HEK293 (cell line): ENCODE measurements at regions of chr12 and their contacts with region 1.

Region 1: DNA sequence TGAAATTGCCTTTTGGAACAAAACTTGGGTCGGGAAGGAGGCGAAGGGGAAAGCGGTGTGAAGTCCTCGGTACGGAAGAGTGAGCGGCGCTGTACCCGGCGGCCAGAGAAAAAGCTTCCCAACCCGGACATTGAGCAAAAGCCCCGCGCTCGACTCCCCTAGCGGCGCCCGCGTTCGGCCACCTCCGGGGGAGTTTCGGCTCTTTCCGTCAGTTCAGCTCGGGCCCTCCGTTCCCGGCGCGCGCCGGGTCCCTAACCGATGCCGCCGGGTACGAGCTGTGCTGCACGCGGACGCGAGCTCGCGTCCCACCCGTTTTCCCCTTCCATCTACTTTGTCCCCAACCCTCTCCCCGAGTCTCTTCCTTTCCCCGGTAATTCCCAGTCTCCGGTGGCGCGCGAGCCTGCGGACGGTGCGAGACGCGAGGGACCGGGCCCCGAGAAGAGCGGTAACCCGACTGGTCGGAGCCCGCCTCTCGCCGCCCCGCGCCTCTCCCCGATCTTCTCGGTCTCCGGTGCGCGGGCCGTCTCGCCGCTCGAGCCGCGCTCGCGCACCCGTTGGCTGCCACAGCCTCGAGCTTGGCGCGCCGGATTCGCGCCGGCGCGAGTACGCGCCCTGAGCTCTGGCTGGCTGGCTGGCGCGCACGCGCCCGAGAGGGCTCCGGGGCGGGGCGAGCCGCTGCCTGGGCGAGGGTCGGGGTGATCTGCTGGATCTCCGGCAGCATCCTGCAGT is 446 bp upstream of the SPATS2 start:
- H3K4me3 ChIP-seq: peak overlapping the region; percentile 97
- H3K27ac ChIP-seq: peak overlapping the region; percentile 99
- H3K4me1 ChIP-seq: peaks cover 9% of the 10 kb centered on the region
- CTCF ChIP-seq: peak; percentile 90

Region 2: GRCh38 chr12:49188914-49189367 is 177.9 kb before region 1 on chr12 and contains the start of gene TUBA1A:
- CTCF ChIA-PET with region 1: no interaction called
- POLR2A ChIA-PET with region 1: no interaction called
- H3K4me3 ChIP-seq: peak within 1 kb of the TSS; percentile 86
- H3K27ac ChIP-seq: peak within 1 kb of the TSS; percentile 94
- H3K4me1 ChIP-seq: peaks cover 6% of the 10 kb centered on the region; the same call in 1 of the 2 replicates
- CTCF ChIP-seq: no peak

Region 3: DNA sequence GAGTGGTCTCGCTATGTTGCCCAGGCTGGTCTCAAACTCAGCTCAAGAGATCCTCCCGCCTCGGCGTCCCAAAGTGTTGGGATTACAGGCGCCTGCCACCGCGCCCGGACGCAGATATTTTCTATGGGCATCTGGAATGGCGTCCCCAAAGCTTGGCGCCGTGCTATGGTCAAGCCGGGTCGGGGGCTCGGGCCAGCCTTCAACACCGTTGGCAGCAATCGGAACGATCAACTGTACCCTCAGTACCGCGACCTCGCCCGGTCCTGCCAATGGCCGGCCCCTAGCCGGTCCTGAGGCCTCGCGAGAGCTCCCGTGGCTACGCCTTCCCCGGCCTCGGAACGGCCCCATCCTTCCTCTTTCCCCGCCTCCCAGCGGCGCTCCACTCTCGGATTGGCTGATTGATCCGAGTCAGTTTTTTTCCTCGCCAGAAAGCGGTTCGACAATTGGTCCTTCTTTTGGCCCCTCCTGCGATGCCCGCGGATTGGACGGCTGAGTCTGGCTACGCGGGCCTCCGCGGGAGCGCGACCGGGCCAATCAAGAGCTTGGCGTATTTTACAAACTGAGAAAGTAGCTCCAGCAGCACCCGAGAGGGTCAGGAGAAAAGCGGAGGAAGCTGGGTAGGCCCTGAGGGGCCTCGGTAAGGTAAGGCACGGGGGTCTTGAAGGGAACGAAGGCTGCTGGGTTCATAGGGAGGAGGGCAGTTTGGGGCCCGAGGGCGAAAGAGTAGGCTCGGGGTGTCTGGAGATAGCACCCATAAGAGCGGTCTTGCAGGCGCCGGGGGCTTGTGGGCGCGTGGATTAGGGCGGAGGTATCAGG is 43.9 kb before region 1 on chr12 and contains the start of gene TROAP:
- CTCF ChIA-PET with region 1: no interaction called
- POLR2A ChIA-PET with region 1: interaction called, 24 read pairs
- H3K4me3 ChIP-seq: peak within 1 kb of the TSS; percentile 73
- H3K27ac ChIP-seq: peak within 1 kb of the TSS; percentile 46
- H3K4me1 ChIP-seq: 0 out of 2 replicates have a peak, but pooled peaks cover 4% of the 10 kb centered on the region
- CTCF ChIP-seq: no peak

Region 4: DNA sequence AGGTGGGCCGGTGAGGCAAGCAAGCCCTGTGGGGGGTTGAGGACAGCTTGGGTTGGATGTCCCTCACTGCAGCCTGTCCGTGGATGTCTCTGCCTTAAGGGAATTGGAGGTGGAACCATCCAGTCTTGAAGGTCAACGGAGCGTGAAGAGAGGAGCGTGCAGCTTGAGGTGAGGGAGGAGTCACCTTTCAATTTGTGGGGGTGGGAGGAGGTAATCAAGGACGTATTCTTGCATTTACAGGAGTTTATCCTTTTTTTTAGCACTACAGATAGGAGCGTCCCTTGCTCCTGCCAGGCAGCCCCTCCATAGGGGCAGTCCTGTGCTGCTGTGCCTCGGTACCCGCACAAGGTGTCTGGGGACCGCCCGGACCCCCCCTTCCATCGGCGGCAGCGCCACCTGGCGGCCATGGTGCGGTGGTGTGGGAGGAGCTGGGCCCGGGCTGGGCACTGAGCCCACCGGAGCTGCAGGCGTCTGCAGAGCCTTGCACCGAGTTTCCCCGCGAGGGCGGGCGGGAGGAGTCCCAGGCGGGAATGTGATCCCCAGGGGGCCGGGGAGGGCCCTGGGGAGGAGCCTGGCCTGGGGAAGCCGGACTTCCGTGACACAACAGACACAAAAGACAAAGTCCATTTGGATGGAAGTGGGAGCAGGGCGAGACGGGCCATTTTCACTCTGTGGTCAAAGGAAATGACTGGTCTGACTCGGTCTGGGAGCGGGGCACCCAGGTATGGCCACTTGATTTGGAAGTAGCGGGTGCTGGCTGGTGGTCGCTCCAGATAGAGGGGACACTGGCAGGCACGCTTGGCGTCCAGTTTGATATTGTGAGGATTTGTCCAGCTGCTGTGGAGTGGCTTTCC is 19.2 kb before region 1 on chr12:
- CTCF ChIA-PET with region 1: interaction called, 16 read pairs
- POLR2A ChIA-PET with region 1: interaction called, 24 read pairs
- H3K4me3 ChIP-seq: peak overlapping the region; percentile 32
- H3K27ac ChIP-seq: peak overlapping the region; percentile 80; the same call in 1 of the 2 replicates
- H3K4me1 ChIP-seq: peaks cover 21% of the 10 kb centered on the region
- CTCF ChIP-seq: peak; percentile 97

Region 5: GRCh38 chr12:49462083-49462744 is 95.4 kb after region 1 on chr12:
- CTCF ChIA-PET with region 1: no interaction called
- POLR2A ChIA-PET with region 1: interaction called, 10 read pairs
- H3K4me3 ChIP-seq: no peak overlapping the region
- H3K27ac ChIP-seq: no peak overlapping the region
- H3K4me1 ChIP-seq: no peaks in the 10 kb centered on the region
- CTCF ChIP-seq: no peak

Region 6: DNA sequence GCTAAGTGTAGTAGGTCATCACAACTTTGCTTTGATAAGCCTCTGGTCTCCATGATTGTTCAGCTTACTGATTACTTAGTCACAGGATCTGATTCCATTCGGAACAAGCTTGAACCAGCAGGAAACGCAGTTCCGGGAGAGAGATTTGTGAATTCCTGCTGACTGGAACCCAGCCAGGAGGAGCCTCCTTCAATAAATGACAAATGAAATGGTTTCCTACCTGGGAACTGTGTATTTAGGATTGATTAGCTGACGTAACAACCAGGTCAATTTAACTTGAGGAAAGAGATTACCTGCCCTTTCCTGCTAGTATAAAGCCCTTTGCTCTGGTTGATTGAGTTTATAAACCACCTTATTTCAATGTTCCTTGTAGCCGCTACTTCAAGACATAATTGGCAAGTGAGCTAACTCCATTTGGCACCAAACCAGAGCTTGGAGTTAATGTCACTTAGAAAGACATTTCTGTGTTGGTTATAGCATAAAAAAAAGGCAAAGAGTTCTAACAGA is 136.9 kb after region 1 on chr12:
- CTCF ChIA-PET with region 1: interaction called, 517 read pairs
- POLR2A ChIA-PET with region 1: interaction called, 9 read pairs
- H3K4me3 ChIP-seq: no peak overlapping the region
- H3K27ac ChIP-seq: 0 out of 2 replicates have a peak overlapping the region, but pooled peaks have one; percentile 16
- H3K4me1 ChIP-seq: no peaks in the 10 kb centered on the region; the same call in 1 of the 2 replicates
- CTCF ChIP-seq: no peak